ENCODE measurements at regions of chr15 and their contacts with region 1.

Region 1: DNA sequence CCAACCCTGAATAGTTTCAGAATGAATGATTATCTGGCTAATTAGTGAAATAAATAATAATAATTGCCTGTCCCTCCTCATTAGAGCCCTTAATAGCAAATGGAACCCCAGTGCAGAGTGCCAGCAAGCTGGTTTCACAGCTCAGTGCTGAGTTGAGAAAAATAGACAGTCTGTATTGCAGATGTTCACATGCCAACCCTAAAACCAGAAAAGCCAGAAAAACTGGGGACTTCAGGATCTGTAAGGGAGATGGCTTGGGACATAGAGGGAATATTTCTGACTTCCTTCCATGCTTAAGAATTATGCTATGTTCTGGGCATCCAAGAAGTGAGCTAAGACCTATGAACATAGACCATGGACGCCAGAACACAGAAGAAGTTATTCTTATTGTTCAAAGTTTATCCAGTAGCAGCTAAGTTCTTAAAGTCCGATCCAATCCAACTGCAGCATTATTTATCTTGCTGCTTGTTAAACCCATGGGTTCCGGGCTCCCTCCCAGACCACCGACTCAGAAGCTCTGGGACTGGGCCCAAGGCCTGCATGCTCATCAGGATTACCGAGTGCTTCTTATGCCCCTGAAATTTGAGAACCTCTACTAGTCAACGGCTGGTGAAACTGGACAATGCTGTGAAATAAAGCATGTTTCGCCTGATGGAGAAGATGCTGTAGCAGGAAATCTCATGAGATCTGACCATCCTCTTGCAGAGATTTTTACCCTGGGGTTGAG is 158.3 kb downstream of the FOXB1 start:
- DNase-seq: no peak
- ATAC-seq: no peak
- H3K4me3 ChIP-seq: no peak overlapping the region
- H3K27ac ChIP-seq: no peak overlapping the region
- H3K4me1 ChIP-seq: no peaks in the 10 kb centered on the region
- H3K27me3 ChIP-seq: peaks cover 5% of the 10 kb centered on the region; the same call in 1 of the 2 replicates
- CTCF ChIP-seq: no peak
- POLR2A ChIP-seq: no peak
- RAD21 ChIP-seq: no peak

Region 2: DNA sequence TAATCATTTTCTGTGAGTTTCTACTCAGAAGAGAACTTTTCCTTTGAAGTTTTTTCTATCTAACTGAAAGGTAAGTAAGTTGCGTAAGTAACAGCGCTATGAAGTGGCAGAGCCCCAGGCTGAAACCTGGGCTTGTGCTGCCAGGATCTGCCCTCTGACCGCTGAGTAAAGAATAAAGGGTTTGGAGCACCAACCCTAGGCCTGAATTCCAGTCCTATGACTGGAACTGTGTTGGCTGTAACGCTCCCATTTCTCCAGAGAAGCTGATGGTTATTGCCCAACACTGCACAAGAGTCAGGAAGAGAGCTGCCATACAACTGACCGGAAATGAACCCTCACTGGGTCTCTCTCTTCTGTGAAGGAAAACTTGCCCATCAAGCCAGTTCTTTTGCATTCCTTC is 71.2 kb before region 1 on chr15:
- CTCF ChIA-PET with region 1: no interaction called
- POLR2A ChIA-PET with region 1: no interaction called
- dilution Hi-C with region 1: no loop called
- in situ Hi-C with region 1: no loop called
- intact Hi-C with region 1: no loop called
- DNase-seq: peak; percentile 83
- ATAC-seq: peak; percentile 90
- H3K4me3 ChIP-seq: no peak overlapping the region
- H3K27ac ChIP-seq: no peak overlapping the region
- H3K4me1 ChIP-seq: peaks cover 2% of the 10 kb centered on the region; the same call in 1 of the 2 replicates
- H3K27me3 ChIP-seq: peaks cover 6% of the 10 kb centered on the region; the same call in 1 of the 2 replicates
- CTCF ChIP-seq: no peak
- POLR2A ChIP-seq: no peak
- RAD21 ChIP-seq: no peak

Region 3: GRCh38 chr15:60101416-60101941 is 60.9 kb before region 1 on chr15:
- CTCF ChIA-PET with region 1: no interaction called
- POLR2A ChIA-PET with region 1: no interaction called
- dilution Hi-C with region 1: no loop called
- in situ Hi-C with region 1: no loop called
- intact Hi-C with region 1: loop called (anchors 10 kb)
- DNase-seq: no peak
- ATAC-seq: no peak
- H3K4me3 ChIP-seq: no peak overlapping the region
- H3K27ac ChIP-seq: no peak overlapping the region
- H3K4me1 ChIP-seq: no peaks in the 10 kb centered on the region
- H3K27me3 ChIP-seq: peaks cover 3% of the 10 kb centered on the region
- CTCF ChIP-seq: no peak
- POLR2A ChIP-seq: no peak
- RAD21 ChIP-seq: no peak

Region 4: DNA sequence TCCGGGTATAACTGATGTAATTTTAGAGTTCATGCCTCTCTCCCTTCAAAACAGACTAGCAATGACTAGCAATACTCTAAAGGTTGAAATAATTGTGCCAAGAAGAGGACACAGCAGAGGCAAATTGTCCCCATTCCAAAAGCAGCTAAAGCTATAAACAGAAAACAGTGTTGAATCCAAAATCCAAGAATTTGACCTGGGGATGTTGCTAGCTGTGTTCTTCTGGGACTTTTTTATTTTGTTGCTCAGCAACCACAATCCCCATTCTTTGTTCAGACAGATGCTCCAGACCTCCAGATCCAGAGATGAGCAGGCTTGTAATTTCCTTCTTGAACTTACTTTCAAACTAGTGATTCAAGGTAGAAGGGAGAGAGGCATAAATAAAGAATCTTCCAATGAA is 33.2 kb after region 1 on chr15:
- CTCF ChIA-PET with region 1: no interaction called
- POLR2A ChIA-PET with region 1: no interaction called
- dilution Hi-C with region 1: no loop called
- in situ Hi-C with region 1: no loop called
- intact Hi-C with region 1: no loop called
- DNase-seq: no peak
- ATAC-seq: no peak
- H3K4me3 ChIP-seq: no peak overlapping the region
- H3K27ac ChIP-seq: no peak overlapping the region
- H3K4me1 ChIP-seq: no peaks in the 10 kb centered on the region
- H3K27me3 ChIP-seq: no peaks in the 10 kb centered on the region; the same call in none of the 2 replicates
- CTCF ChIP-seq: no peak
- POLR2A ChIP-seq: no peak
- RAD21 ChIP-seq: no peak